ENCODE measurements at regions of chr12 and their contacts with region 1.

Region 1: DNA sequence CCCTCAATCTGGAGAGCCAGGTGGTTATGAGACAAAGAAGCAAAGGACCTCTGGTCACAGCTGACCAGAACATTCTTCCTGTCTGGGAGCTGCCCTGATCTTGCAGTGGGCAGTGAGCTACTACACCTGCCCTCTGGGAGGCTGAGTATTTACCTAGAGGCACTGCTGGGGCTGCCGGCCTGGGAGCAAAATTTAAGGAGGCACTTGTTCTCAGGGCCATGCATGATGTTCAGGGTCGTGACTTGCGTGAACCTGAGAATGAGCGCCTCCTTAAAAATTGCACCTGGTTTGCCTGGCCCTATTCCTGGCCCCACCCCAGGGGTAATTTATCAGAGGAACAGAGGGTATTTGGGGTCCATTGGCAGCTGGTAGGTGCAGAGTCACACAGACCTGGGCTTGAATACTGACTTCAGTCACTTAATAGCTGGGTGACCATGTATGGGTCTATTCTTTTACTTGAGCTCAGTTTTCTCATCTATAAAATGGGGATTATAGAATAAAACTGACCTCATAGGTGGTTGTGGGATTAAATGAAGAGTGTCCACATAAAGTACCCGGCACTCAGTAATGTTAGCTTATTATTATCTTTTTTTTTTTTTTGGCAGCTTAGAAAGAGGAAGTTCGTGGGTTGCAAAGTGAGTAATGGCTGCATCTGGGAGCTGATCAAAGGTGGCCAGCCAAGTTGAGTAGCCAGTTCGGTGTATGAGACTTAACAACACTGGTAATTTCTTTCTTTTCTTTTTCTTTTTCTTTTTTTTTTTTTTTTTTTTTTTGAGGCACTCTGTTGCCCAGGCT is 107.4 kb upstream of the MED13L start:
- DNase-seq: peak in 3 of 4 experiments; percentile 31 to 62 (median 32)
- ATAC-seq: peak; percentile 31
- H3K4me3 ChIP-seq: no peak overlapping the region
- H3K27ac ChIP-seq: peak overlapping the region; percentile 85
- H3K4me1 ChIP-seq: peaks cover 47 to 51% of the 10 kb centered on the region in 2 experiments
- H3K27me3 ChIP-seq: no peaks in the 10 kb centered on the region
- CTCF ChIP-seq: no peak
- EP300 ChIP-seq: 0 out of 2 replicates have a peak, but pooled peaks have one; percentile 24
- POLR2A ChIP-seq: no peak
- RAD21 ChIP-seq: no peak

Region 2: GRCh38 chr12:116358893-116359761 is 25.8 kb before region 1 on chr12:
- CTCF ChIA-PET with region 1: no interaction called
- POLR2A ChIA-PET with region 1: no interaction called
- in situ Hi-C with region 1: no loop called
- intact Hi-C with region 1: loop called (anchors 2 kb)
- DNase-seq: peak; percentile 89 to 98 (median 92)
- ATAC-seq: peak; percentile 92
- H3K4me3 ChIP-seq: peak overlapping the region; percentile 30
- H3K27ac ChIP-seq: peak overlapping the region; percentile 94
- H3K4me1 ChIP-seq: peaks cover 19 to 42% of the 10 kb centered on the region in 2 experiments
- H3K27me3 ChIP-seq: no peaks in the 10 kb centered on the region
- CTCF ChIP-seq: no peak
- EP300 ChIP-seq: peak; percentile 56
- POLR2A ChIP-seq: peak; percentile 57
- RAD21 ChIP-seq: peak in 1 of 2 experiments; percentile 4; a peak in 1 of 4 replicates

Measured in K562 (cell line).